CD4-positive, alpha-beta memory T cell (primary cell): ENCODE measurements at regions of chr17 and their contacts with region 1.

Region 1: GRCh38 chr17:29116804-29117772 is 63.1 kb downstream of the MYO18A start:
- DNase-seq: peak; percentile 66 to 73 (median 71)
- H3K4me3 ChIP-seq: no peak overlapping the region
- H3K4me3 Mint-ChIP-seq: peak overlapping the region in 1 of 8 donors; percentile 15
- H3K27ac ChIP-seq: no peak overlapping the region
- H3K27ac Mint-ChIP-seq: peak overlapping the region in 4 of 7 donors; percentile 43 to 75 (median 60)
- H3K4me1 ChIP-seq: peaks cover 4% of the 10 kb centered on the region
- H3K4me1 Mint-ChIP-seq: peaks cover 4 to 9% (median 8%) of the 10 kb centered on the region in 4 donors
- H3K27me3 ChIP-seq: no peaks in the 10 kb centered on the region
- H3K27me3 Mint-ChIP-seq: no peaks in the 10 kb centered on the region

Region 2: GRCh38 chr17:28644985-28645939 is 471.8 kb before region 1 on chr17 and contains the start of gene BLTP2:
- CTCF ChIA-PET with region 1: no interaction called
- POLR2A ChIA-PET with region 1: no interaction called
- intact Hi-C with region 1: loop called (anchors 2 kb)
- DNase-seq: peak; percentile 93 to 95 (median 94)
- H3K4me3 ChIP-seq: peak within 1 kb of the TSS; percentile 45 to 98
- H3K4me3 Mint-ChIP-seq: peak within 1 kb of the TSS; percentile 86 to 96 (median 92)
- H3K27ac ChIP-seq: peak within 1 kb of the TSS; percentile 91
- H3K27ac Mint-ChIP-seq: peak within 1 kb of the TSS; percentile 93 to 99 (median 98)
- H3K4me1 ChIP-seq: peaks cover 47% of the 10 kb centered on the region
- H3K4me1 Mint-ChIP-seq: peaks cover 31 to 45% (median 37%) of the 10 kb centered on the region in 4 donors
- H3K27me3 ChIP-seq: no peaks in the 10 kb centered on the region
- H3K27me3 Mint-ChIP-seq: no peaks in the 10 kb centered on the region
- total RNA-seq, gene BLTP2: 132 to 149 TPM

Region 3: GRCh38 chr17:28967221-28968140 is 149.6 kb before region 1 on chr17:
- CTCF ChIA-PET with region 1: interaction called, 318 read pairs
- POLR2A ChIA-PET with region 1: interaction called, 14 read pairs
- intact Hi-C with region 1: loop called (anchors 1 kb)
- DNase-seq: peak in 1 of 5 donors; percentile 25
- H3K4me3 ChIP-seq: no peak overlapping the region
- H3K4me3 Mint-ChIP-seq: no peak overlapping the region
- H3K27ac ChIP-seq: no peak overlapping the region
- H3K27ac Mint-ChIP-seq: peak overlapping the region in 2 of 7 donors; percentile 19 to 39
- H3K4me1 ChIP-seq: no peaks in the 10 kb centered on the region
- H3K4me1 Mint-ChIP-seq: peaks cover 0 to 3% (median 0%) of the 10 kb centered on the region in 4 donors
- H3K27me3 ChIP-seq: no peaks in the 10 kb centered on the region
- H3K27me3 Mint-ChIP-seq: peaks cover 8 to 14% of the 10 kb centered on the region in 2 donors

Region 4: GRCh38 chr17:28973425-28973824 is 143.7 kb before region 1 on chr17:
- CTCF ChIA-PET with region 1: interaction called, 28 read pairs
- POLR2A ChIA-PET with region 1: no interaction called
- intact Hi-C with region 1: no loop called
- DNase-seq: no peak
- H3K4me3 ChIP-seq: no peak overlapping the region
- H3K4me3 Mint-ChIP-seq: no peak overlapping the region
- H3K27ac ChIP-seq: no peak overlapping the region
- H3K27ac Mint-ChIP-seq: peak overlapping the region in 1 of 7 donors; percentile 22
- H3K4me1 ChIP-seq: no peaks in the 10 kb centered on the region
- H3K4me1 Mint-ChIP-seq: peaks cover 0 to 1% (median 0%) of the 10 kb centered on the region in 4 donors
- H3K27me3 ChIP-seq: no peaks in the 10 kb centered on the region
- H3K27me3 Mint-ChIP-seq: peaks cover 0 to 6% of the 10 kb centered on the region in 2 donors

Region 5: DNA sequence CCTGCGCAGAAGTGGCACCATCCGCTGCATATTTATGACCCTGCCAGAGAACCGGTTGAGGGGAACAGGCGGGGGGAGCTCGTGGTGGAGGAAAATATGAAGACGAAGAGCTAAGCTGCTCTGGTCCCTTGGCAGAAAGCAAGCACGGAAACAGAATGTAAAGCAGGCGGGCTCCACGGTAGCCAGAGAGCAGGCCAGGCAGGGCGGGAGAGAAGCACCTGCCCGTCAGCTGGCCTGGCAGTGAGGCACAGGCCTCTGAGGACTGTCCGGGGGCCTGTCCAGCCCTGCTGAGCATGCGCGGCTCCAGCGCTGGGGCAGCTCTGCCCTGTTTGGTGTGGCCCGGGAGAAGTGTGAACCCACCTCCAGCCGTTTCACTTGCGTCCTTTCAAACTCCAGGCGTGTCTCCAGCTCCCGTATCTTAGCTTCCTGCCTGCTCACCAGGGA is 27.5 kb before region 1 on chr17:
- CTCF ChIA-PET with region 1: interaction called, 39 read pairs
- POLR2A ChIA-PET with region 1: no interaction called
- intact Hi-C with region 1: no loop called
- DNase-seq: no peak
- H3K4me3 ChIP-seq: no peak overlapping the region
- H3K4me3 Mint-ChIP-seq: no peak overlapping the region
- H3K27ac ChIP-seq: no peak overlapping the region
- H3K27ac Mint-ChIP-seq: peak overlapping the region in 3 of 7 donors; percentile 18 to 64 (median 54)
- H3K4me1 ChIP-seq: no peaks in the 10 kb centered on the region
- H3K4me1 Mint-ChIP-seq: no peaks in the 10 kb centered on the region
- H3K27me3 ChIP-seq: no peaks in the 10 kb centered on the region
- H3K27me3 Mint-ChIP-seq: no peaks in the 10 kb centered on the region

Region 6: GRCh38 chr17:29140051-29140621 is 23.0 kb after region 1 on chr17:
- CTCF ChIA-PET with region 1: interaction called, 213 read pairs
- POLR2A ChIA-PET with region 1: interaction called, 17 read pairs
- intact Hi-C with region 1: no loop called
- DNase-seq: peak; percentile 65 to 92 (median 69)
- H3K4me3 ChIP-seq: peak overlapping the region; percentile 55 to 72
- H3K4me3 Mint-ChIP-seq: peak overlapping the region; percentile 90 to 98 (median 92)
- H3K27ac ChIP-seq: peak overlapping the region; percentile 81
- H3K27ac Mint-ChIP-seq: peak overlapping the region; percentile 91 to 99 (median 97)
- H3K4me1 ChIP-seq: peaks cover 69% of the 10 kb centered on the region
- H3K4me1 Mint-ChIP-seq: peaks cover 49 to 82% (median 63%) of the 10 kb centered on the region in 4 donors
- H3K27me3 ChIP-seq: no peaks in the 10 kb centered on the region
- H3K27me3 Mint-ChIP-seq: no peaks in the 10 kb centered on the region

Region 7: DNA sequence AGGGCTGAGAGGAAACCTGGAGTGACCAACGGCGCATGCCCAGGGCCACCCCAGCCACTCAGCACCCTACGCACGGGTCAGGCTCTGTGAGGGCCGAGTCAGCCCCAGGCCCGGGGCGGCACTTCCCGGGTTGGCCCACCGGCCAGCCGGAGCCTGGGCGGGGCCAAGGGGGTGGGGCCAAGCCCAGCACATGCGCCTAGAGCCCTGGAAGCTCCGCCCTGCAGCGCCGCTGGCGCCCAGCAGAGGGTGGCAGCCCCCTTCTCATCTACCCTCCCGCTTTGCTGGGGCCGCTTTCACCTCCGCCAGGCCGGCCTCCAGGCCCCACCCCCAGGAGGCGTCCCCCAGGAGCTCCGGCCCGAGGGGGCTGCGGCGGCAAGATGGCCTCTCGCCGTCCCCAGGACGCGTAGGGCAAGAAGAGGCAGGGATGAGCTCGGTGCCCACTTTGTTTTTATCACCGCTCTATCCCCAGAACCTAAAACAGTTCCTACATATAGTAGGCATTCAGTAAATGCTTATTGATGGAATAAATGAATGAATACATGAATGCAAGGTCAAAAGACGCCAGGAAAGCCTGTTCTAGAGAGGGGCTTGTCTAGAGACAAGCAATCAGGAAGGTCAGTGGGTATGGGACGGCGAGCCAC is 31.8 kb after region 1 on chr17:
- CTCF ChIA-PET with region 1: interaction called, 213 read pairs
- POLR2A ChIA-PET with region 1: interaction called, 4 read pairs
- intact Hi-C with region 1: no loop called
- DNase-seq: peak; percentile 88 to 91 (median 89)
- H3K4me3 ChIP-seq: peak overlapping the region; percentile 41 to 42
- H3K4me3 Mint-ChIP-seq: peak overlapping the region; percentile 68 to 84 (median 75)
- H3K27ac ChIP-seq: peak overlapping the region; percentile 53
- H3K27ac Mint-ChIP-seq: peak overlapping the region; percentile 66 to 92 (median 90)
- H3K4me1 ChIP-seq: peaks cover 27% of the 10 kb centered on the region
- H3K4me1 Mint-ChIP-seq: peaks cover 23 to 62% (median 33%) of the 10 kb centered on the region in 4 donors
- H3K27me3 ChIP-seq: no peaks in the 10 kb centered on the region
- H3K27me3 Mint-ChIP-seq: no peaks in the 10 kb centered on the region